ENCODE measurements at regions of chr12 and their contacts with region 1.

Region 1: DNA sequence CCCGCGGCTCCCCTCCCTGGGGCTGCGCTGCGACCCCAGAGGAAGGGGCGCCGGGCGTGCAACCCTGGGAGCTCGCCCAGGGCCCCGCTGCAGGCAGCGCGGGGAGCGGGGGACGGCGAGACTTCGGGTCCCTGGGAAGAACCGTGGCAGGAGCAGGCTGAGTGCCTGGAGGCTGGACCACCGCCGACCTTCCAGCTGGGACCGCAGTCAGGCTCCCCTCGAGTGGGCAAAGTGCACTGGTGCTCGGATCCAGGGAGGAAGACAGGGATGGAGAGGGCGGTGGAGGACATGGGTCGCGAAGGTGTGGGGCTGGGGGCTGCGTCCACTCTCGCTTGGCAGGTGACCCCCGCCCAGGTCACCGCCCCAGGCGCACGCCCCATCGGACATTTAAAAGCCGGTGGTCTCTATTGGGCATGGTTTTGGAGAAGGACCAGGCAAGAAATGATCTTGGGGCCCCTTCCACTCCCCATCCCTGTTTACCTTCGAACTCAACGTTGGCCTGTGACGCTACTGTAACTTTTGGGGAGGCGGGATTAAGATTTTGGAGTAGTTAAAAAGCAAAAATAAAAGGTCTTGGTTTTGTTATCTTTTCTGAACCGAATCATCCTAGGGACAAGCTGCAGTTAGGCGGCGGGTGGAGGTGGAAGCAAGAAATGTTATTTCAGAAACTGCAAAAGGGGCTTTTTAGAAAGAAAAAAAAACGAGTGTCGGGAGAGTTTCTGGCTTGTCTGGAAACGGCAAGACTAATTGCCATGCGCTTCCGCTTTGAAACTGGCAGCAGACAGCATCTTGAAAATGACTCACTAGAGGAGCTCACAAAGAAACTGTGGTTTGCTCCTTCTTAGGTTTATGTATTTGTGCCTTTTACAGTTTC is 1.0 kb downstream of the ELK3 start:
- DNase-seq: peak; percentile 63
- H3K4me3 Mint-ChIP-seq: peak overlapping the region; percentile 92
- H3K27ac Mint-ChIP-seq: peak overlapping the region; percentile 94
- H3K4me1 Mint-ChIP-seq: peaks cover 54% of the 10 kb centered on the region
- H3K27me3 Mint-ChIP-seq: no peaks in the 10 kb centered on the region

Region 2: DNA sequence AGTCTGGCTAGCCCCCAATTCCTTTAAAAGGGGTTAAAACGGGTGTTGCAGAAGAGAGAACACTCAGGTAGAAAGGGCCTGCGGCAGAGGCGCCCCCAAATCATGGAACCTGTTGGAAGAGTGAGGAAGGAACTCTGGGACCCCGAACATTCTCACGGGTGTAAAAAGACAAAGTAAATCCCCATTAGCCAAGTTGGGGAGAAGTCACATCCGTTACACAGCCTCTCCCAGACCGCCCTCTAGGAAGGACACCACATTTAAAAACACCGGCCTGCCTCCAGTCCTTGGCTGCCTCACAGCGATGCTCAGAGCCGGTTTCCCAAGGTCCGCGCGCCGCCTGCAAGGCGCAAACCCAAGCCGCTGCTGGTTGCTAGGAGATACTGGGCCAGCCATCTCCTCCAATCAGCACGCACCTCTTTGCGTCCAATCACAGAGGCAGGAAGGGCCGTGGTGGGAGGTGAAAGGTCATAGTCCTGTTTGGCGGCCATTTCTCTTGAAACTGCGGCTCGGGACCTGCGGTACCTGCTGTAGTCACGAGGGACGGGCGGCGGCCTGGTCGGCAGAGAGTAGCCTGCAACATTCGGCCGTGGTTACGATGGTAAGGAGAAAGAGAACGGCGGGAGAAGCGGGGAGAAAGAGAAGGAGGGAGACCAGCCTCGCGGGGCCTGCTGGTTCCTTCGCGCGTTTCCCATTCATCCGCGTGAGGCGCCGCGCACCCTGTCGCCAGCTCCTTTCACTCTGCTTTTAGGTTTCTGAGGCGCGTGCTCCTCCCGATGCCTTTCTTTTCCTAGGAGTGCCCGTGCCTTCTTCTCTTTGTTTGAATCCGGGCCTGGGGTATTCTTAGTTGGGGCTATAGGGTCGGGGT is 336.5 kb before region 1 on chr12 and contains the start of gene SNRPF:
- intact Hi-C with region 1: loop called (anchors 10 kb)
- DNase-seq: peak; percentile 93
- H3K4me3 Mint-ChIP-seq: peak within 1 kb of the TSS; percentile 2
- H3K27ac Mint-ChIP-seq: no peak within 1 kb of the TSS
- H3K4me1 Mint-ChIP-seq: peaks cover 28% of the 10 kb centered on the region
- H3K27me3 Mint-ChIP-seq: peaks cover 7% of the 10 kb centered on the region
- total RNA-seq, gene SNRPF: 65.8 and 77.2 TPM in 2 replicates

Region 3: GRCh38 chr12:96029826-96030225 is 165.4 kb before region 1 on chr12:
- intact Hi-C with region 1: no loop called
- DNase-seq: no peak
- H3K4me3 Mint-ChIP-seq: no peak overlapping the region
- H3K27ac Mint-ChIP-seq: no peak overlapping the region
- H3K4me1 Mint-ChIP-seq: peaks cover 16% of the 10 kb centered on the region
- H3K27me3 Mint-ChIP-seq: no peaks in the 10 kb centered on the region

Region 4: GRCh38 chr12:96047229-96048211 is 147.7 kb before region 1 on chr12:
- intact Hi-C with region 1: loop called (anchors 5 kb)
- DNase-seq: no peak
- H3K4me3 Mint-ChIP-seq: peak overlapping the region; percentile 45
- H3K27ac Mint-ChIP-seq: peak overlapping the region; percentile 73
- H3K4me1 Mint-ChIP-seq: peaks cover 36% of the 10 kb centered on the region
- H3K27me3 Mint-ChIP-seq: no peaks in the 10 kb centered on the region

Region 5: DNA sequence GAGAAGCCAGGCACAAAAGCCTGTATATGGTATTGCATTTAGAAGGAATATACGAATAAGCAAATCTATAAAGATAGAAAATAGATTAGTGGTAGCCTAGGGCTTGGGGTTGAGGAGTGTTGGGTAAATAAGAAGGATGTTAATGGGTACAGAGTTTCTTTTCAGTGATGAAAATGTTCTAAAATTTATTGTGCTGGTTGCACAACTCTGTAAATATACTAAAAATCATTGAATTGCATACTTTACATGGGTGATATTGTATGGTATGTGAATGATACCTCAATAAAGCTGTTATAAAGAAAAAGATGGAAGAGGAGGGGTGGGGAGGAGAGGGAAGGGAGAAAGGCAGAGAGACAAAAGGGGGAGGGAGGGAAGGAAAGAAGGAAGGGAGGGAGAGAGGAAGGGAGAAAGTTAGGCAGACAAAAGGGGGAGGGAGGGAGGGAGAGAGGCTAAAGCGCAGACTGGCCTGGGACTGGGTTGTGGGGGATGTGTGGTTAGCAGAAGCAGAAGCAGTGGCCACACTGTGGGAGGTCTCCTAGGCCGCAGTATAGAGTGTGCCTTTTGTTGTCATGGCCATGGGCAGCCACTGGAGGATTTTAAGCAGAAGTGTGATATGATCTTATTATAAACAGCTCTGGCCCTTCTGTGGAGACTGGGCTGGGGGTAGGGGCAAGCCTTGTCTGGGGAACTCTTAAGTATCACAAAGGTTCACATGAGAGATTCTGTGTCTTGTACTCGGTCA is 74.7 kb before region 1 on chr12:
- intact Hi-C with region 1: loop called (anchors 2 kb)
- DNase-seq: no peak
- H3K4me3 Mint-ChIP-seq: no peak overlapping the region
- H3K27ac Mint-ChIP-seq: peak overlapping the region; percentile 40
- H3K4me1 Mint-ChIP-seq: peaks cover 14% of the 10 kb centered on the region
- H3K27me3 Mint-ChIP-seq: no peaks in the 10 kb centered on the region

Region 6: GRCh38 chr12:96136161-96136560 is 59.0 kb before region 1 on chr12:
- intact Hi-C with region 1: no loop called
- DNase-seq: no peak
- H3K4me3 Mint-ChIP-seq: no peak overlapping the region
- H3K27ac Mint-ChIP-seq: no peak overlapping the region
- H3K4me1 Mint-ChIP-seq: peaks cover 23% of the 10 kb centered on the region
- H3K27me3 Mint-ChIP-seq: peaks cover 4% of the 10 kb centered on the region

Region 7: DNA sequence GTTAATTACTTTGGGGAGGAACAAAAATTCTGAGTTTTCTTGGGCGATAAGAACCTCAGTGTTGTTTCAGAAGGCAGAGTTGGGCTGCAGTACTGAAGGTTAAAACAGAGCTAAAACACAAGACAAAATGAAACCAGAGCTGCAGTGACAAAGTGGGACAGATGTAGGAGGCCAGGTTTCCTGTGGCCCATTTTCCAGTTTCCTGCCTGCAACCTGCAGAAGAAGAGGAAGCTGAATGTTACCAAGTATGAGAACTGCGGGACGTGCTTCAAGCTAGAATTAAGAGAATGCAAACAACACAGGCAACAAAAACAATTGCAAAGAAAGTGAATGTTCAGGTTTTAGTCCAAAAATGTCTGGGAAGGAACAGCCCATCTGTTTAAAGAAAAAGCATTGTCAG is 16.8 kb after region 1 on chr12:
- intact Hi-C with region 1: loop called (anchors 1 kb)
- DNase-seq: no peak
- H3K4me3 Mint-ChIP-seq: peak overlapping the region; percentile 10
- H3K27ac Mint-ChIP-seq: peak overlapping the region; percentile 48
- H3K4me1 Mint-ChIP-seq: peaks cover 72% of the 10 kb centered on the region
- H3K27me3 Mint-ChIP-seq: no peaks in the 10 kb centered on the region

Region 8: GRCh38 chr12:96427269-96427729 is 232.1 kb after region 1 on chr12:
- intact Hi-C with region 1: loop called (anchors 5 kb)
- DNase-seq: no peak
- H3K4me3 Mint-ChIP-seq: peak overlapping the region; percentile 58
- H3K27ac Mint-ChIP-seq: peak overlapping the region; percentile 88
- H3K4me1 Mint-ChIP-seq: peaks cover 52% of the 10 kb centered on the region
- H3K27me3 Mint-ChIP-seq: no peaks in the 10 kb centered on the region

Measured in activated T-helper 2 cell treated with anti-CD3 and anti-CD28 coated beads, Interferon-gamma antibody, Interleukin-2, Interleukin-4, amounts not matched to agents 10 μg/mL and 5 μg/mL and 100 μg/mL, durations not matched to agents 14 hours and 24 hours and 36 hours (primary cell).